A549 (cell line): ENCODE measurements at regions of chr1 and their contacts with region 1.

Region 1: GRCh38 chr1:165129568-165130164 is 226.8 kb downstream of the LMX1A start:
- DNase-seq: peak; percentile 42 to 61
- ATAC-seq: peak; percentile 90 to 95
- H3K4me3 ChIP-seq: no peak overlapping the region
- H3K27ac ChIP-seq: no peak overlapping the region
- H3K4me1 ChIP-seq: no peaks in the 10 kb centered on the region
- CTCF ChIP-seq: peak; percentile 59
- EP300 ChIP-seq: no peak
- POLR2A ChIP-seq: no peak
- RAD21 ChIP-seq: peak; percentile 46 to 54; a peak in 4 of 5 replicates

Region 2: GRCh38 chr1:164953098-164953497 is 176.6 kb before region 1 on chr1:
- CTCF ChIA-PET with region 1: no interaction called
- POLR2A ChIA-PET with region 1: no interaction called
- DNase-seq: no peak
- ATAC-seq: peak in 1 of 2 experiments; percentile 37; a peak in 3 of 6 replicates
- H3K4me3 ChIP-seq: no peak overlapping the region
- H3K27ac ChIP-seq: no peak overlapping the region
- H3K4me1 ChIP-seq: no peaks in the 10 kb centered on the region
- CTCF ChIP-seq: no peak; the same call in 2 of the 3 replicates
- EP300 ChIP-seq: no peak
- POLR2A ChIP-seq: no peak
- RAD21 ChIP-seq: peak; percentile 23 to 37; a peak in 2 of 5 replicates

Region 3: GRCh38 chr1:165068741-165069140 is 60.9 kb before region 1 on chr1:
- CTCF ChIA-PET with region 1: no interaction called
- POLR2A ChIA-PET with region 1: no interaction called
- DNase-seq: no peak
- ATAC-seq: no peak
- H3K4me3 ChIP-seq: no peak overlapping the region
- H3K27ac ChIP-seq: no peak overlapping the region
- H3K4me1 ChIP-seq: peaks cover 5% of the 10 kb centered on the region; the same call in 1 of the 3 replicates
- CTCF ChIP-seq: no peak
- EP300 ChIP-seq: no peak
- POLR2A ChIP-seq: no peak
- RAD21 ChIP-seq: no peak

Region 4: DNA sequence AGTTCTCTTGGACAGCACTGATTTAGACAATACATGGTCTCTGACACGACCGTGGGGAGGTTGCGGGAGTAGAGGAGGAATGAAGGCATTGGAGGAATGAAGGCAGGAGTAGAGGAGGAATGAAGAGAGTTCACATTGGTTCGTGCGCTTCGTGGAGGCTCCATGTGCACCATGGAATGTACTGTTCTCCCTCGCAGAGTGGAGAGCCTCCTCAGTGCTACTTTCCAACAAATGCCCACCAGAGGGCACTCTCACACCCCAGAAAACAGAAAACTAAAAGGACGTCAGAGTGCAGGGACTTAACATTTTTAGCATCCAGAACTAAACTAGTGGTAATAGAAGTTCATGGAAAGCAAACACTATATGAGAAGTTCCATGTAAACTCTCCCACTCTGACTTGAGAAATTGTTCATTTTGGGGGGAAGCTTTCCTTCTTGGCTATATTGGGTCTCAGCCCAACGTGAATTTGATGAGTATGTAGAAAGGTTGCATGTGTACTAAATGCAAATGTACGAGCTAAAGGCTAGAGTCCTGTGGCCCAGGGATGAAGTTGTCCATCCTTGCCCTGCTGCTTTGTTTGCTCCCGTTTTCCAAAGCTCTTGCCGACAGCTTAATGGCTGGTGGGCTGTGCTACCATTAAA is 15.2 kb after region 1 on chr1:
- CTCF ChIA-PET with region 1: interaction called, 11 read pairs
- POLR2A ChIA-PET with region 1: no interaction called
- DNase-seq: peak in 1 of 2 experiments; percentile 51
- ATAC-seq: peak; percentile 91 to 96
- H3K4me3 ChIP-seq: no peak overlapping the region
- H3K27ac ChIP-seq: no peak overlapping the region
- H3K4me1 ChIP-seq: no peaks in the 10 kb centered on the region
- CTCF ChIP-seq: peak; percentile 74
- EP300 ChIP-seq: no peak
- POLR2A ChIP-seq: no peak
- RAD21 ChIP-seq: peak; percentile 58